Naive thymus-derived CD4-positive, alpha-beta T cell (primary cell): ENCODE measurements at regions of chr6 and their contacts with region 1.

Region 1: DNA sequence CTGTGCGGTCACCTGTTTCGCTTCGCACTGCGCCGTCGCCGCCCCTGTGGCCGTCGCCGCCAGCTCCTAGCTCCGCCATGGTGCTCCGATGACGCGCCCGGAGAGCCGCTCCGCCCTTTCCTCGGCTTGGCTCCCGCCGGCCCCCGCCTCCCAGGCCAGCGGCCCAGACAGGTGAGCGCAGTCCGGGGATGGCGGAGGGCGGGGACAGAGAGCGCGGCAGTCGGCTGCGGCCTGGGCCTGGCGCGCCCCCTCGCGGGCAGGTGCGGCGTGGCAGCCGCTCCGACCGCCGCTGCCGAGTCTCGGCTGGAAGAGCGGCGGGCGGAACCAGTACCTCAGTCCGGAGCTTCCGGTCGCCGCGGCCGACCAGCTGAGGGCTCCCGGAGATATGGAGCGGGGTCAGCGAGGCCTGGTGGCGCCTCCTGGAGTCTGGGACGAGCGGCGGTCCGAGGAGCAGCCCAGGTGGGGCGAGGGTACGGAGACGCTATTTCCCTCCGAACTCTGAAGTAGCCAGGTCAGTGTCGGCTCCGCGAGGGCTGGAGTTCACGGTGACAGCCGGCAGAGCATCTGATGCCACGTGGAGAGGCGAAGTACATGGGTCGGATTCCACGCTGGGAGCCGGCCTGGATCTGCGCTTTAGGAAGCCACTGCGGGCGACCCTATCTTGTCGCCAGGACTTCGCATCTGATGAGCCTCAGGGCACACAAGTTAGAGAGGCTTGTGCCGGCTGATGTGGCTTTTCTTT is at the start of gene MAP7:
- DNase-seq: peak; percentile 30 to 74 (median 60)
- ATAC-seq: peak; percentile 91
- H3K4me3 ChIP-seq: peak within 1 kb of the TSS; percentile 46
- H3K4me3 Mint-ChIP-seq: peak within 1 kb of the TSS; percentile 58 to 82 (median 72)
- H3K27ac ChIP-seq: no peak within 1 kb of the TSS
- H3K27ac Mint-ChIP-seq: peak within 1 kb of the TSS in 1 of 9 donors; percentile 49
- H3K4me1 ChIP-seq: no peaks in the 10 kb centered on the region
- H3K4me1 Mint-ChIP-seq: peaks cover 0 to 16% (median 7%) of the 10 kb centered on the region in 7 donors
- H3K27me3 ChIP-seq: peaks cover 7 to 14% of the 10 kb centered on the region in 2 donors
- H3K27me3 Mint-ChIP-seq: peaks cover 34 to 64% (median 39%) of the 10 kb centered on the region in 5 donors
- total RNA-seq, gene MAP7: 0.14 to 1.1 (median 0.32) TPM

Region 2: DNA sequence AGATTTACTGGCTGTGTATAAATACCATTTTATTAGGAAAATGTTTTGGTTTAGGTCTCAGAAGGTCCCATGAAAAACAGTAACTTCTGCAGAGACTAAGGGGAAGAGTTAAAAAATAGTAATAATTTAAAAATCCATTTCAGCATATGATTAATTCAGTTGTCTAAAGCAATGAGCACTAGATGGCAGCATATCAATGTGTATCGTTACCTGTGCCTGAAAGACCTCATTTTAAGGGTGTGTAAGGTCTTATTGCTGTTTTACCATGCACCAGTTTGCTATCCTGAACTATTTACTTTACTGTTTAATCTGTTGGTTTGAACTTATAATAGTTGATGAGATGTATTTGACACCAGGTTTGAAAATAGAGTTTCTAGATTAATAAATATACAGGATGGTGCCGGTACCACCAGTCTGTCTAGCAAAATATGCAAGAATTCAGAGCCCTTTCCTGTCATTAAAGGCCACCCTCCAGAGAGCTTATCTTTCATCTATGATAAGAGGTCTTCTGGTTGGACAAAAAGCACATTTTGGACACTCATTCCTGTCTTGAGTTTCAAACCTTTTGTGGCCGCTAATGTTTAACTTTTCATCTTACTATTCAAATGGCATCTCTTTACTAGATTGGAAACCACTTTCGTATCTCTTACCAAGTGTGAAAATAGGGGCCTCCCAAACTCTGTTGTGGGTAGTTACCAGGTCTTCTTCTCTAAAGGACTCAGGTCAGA is 1044.1 kb before region 1 on chr6:
- CTCF ChIA-PET with region 1: no interaction called
- POLR2A ChIA-PET with region 1: no interaction called
- intact Hi-C with region 1: loop called in 1 of 2 experiments (anchors 2 kb)
- DNase-seq: peak in 7 of 9 donors; percentile 7 to 53 (median 33)
- ATAC-seq: peak; percentile 90
- H3K4me3 ChIP-seq: no peak overlapping the region
- H3K4me3 Mint-ChIP-seq: no peak overlapping the region
- H3K27ac ChIP-seq: no peak overlapping the region
- H3K27ac Mint-ChIP-seq: peak overlapping the region in 1 of 9 donors; percentile 33
- H3K4me1 ChIP-seq: peaks cover 0 to 6% of the 10 kb centered on the region in 2 donors
- H3K4me1 Mint-ChIP-seq: peaks cover 0 to 14% (median 0%) of the 10 kb centered on the region in 7 donors
- H3K27me3 ChIP-seq: no peaks in the 10 kb centered on the region
- H3K27me3 Mint-ChIP-seq: peaks cover 0 to 2% (median 0%) of the 10 kb centered on the region in 5 donors

Region 3: GRCh38 chr6:136526196-136526930 is 24.1 kb before region 1 on chr6:
- CTCF ChIA-PET with region 1: no interaction called
- POLR2A ChIA-PET with region 1: no interaction called
- intact Hi-C with region 1: loop called in 1 of 2 experiments (anchors 1 kb)
- DNase-seq: peak in 8 of 9 donors; percentile 9 to 43 (median 32)
- ATAC-seq: peak; percentile 83
- H3K4me3 ChIP-seq: no peak overlapping the region
- H3K4me3 Mint-ChIP-seq: peak overlapping the region in 9 of 10 donors; percentile 50 to 77 (median 71)
- H3K27ac ChIP-seq: no peak overlapping the region
- H3K27ac Mint-ChIP-seq: peak overlapping the region in 4 of 9 donors; percentile 25 to 68 (median 31)
- H3K4me1 ChIP-seq: peaks cover 0 to 9% of the 10 kb centered on the region in 2 donors
- H3K4me1 Mint-ChIP-seq: peaks cover 0 to 26% (median 22%) of the 10 kb centered on the region in 7 donors
- H3K27me3 ChIP-seq: no peaks in the 10 kb centered on the region
- H3K27me3 Mint-ChIP-seq: peaks cover 0 to 13% (median 5%) of the 10 kb centered on the region in 5 donors